Cardiac septum (tissue), 1 donor: ENCODE measurements at regions of chr1 and their contacts with region 1.

Region 1: GRCh38 chr1:32992489-32993323 is 28.1 kb upstream of the RNF19B start:
- DNase-seq: peak; percentile 92

Region 2: GRCh38 chr1:32831878-32832277 is 160.8 kb before region 1 on chr1:
- intact Hi-C with region 1: no loop called
- DNase-seq: no peak

Region 3: GRCh38 chr1:32939655-32940371 is 52.9 kb before region 1 on chr1:
- intact Hi-C with region 1: loop called (anchors 5 kb)
- DNase-seq: no peak

Region 4: GRCh38 chr1:33055210-33056008 is 62.7 kb after region 1 on chr1:
- intact Hi-C with region 1: loop called (anchors 5 kb)
- DNase-seq: peak; percentile 89